ENCODE measurements at regions of chr9 and their contacts with region 1.

Region 1: GRCh38 chr9:109244157-109245132 is 76.4 kb downstream of the EPB41L4B start:
- DNase-seq: no peak
- H3K4me3 ChIP-seq: no peak overlapping the region
- H3K27ac ChIP-seq: no peak overlapping the region
- H3K4me1 ChIP-seq: peaks cover 0 to 6% (median 0%) of the 10 kb centered on the region in 4 donors
- H3K27me3 ChIP-seq: peaks cover 0 to 12% (median 0%) of the 10 kb centered on the region in 4 donors
- CTCF ChIP-seq: peak; percentile 73 to 98 (median 93)
- EP300 ChIP-seq: no peak
- POLR2A ChIP-seq: no peak

Region 2: DNA sequence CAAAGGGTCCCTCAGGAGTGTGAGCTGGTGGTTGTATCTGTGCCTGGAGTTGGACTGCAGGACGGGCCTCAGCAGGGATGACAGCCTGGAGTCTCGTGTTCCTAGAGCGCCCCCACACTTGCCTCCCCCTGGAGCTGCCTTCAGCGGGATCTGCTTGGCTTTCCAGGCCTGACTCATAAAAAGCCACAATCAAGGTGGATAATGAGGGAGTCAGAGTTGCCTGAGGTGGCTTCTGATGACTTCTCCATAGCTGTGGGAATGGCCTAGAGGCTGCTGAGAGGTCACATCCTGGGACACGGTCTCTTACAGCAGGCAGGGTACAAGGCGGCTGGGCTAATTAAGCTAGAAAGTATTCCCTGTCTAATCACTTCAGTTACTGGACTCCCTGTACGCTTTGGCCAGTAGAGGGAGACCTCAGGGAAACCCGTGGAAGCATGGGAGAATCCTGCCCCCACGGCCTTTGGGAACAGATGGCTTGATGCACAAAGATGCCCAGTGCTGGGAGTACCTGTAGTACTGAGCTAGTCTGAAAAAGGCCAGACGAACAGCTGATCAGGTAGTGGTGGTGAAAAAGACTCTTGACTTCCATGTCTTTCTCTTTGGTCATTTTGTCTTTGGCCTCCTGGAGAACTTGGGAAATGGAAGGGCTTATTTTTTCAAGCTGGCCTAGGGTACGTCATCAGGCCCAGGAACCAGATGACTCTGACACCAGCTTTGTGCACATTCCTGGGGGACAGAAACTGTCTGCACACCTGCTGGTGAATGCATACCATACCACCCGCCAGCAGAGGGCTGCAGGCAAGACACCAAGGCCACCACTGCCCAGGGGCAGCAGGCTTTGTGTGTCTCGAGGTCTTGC is 61.3 kb before region 1 on chr9:
- intact Hi-C with region 1: no loop called
- DNase-seq: no peak
- H3K4me3 ChIP-seq: no peak overlapping the region
- H3K27ac ChIP-seq: no peak overlapping the region
- H3K4me1 ChIP-seq: no peaks in the 10 kb centered on the region
- H3K27me3 ChIP-seq: peaks cover 0 to 3% (median 0%) of the 10 kb centered on the region in 4 donors
- CTCF ChIP-seq: no peak
- EP300 ChIP-seq: no peak
- POLR2A ChIP-seq: no peak

Region 3: DNA sequence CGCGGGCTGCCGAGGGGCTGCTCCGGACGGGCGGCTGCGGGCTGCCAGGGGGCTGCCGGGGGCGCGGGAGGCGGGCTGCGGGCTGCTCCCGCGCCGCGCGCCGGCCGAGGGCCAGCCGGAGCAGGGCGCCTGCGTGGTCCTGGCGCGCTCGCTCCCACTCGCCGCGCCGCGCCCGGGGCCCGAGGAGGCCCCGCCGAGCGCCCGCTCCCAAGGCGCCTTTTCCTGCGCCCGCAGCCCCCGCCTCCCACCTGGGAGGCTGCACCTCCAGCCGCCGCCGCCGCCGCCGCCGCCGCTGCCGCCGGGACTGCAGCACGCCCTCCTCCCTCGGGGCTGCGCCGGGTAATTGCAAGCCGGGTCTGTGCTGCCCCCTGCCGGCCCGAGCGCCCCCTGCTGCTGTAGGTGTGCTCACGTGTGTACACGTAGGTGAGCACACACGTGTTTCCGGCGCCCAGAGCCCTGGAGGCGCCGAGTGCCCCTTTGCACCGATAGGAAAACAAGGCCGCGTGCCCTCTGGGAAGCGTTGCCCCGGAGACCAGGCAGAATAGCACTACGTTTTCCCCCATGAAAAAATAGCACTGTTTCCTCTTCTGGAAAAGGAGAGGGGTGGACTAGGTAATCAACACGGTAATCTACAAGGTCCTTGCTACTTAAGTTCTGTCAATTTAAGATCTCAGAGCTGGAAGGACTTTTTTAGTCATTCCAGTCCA is 76.5 kb after region 1 on chr9 and contains the start of gene EPB41L4B:
- intact Hi-C with region 1: loop called (anchors 1 kb)
- DNase-seq: no peak
- H3K4me3 ChIP-seq: peak within 1 kb of the TSS; percentile 52 to 71 (median 54)
- H3K27ac ChIP-seq: no peak within 1 kb of the TSS
- H3K4me1 ChIP-seq: peaks cover 14 to 20% (median 16%) of the 10 kb centered on the region in 4 donors
- H3K27me3 ChIP-seq: peaks cover 0 to 35% (median 7%) of the 10 kb centered on the region in 4 donors
- CTCF ChIP-seq: peak; percentile 92 to 97 (median 95)
- EP300 ChIP-seq: no peak
- POLR2A ChIP-seq: no peak
- total RNA-seq, gene EPB41L4B: 0.42 to 2.3 (median 1.5) TPM

Region 4: GRCh38 chr9:109401168-109401989 is 156.9 kb after region 1 on chr9:
- intact Hi-C with region 1: loop called (anchors 10 kb)
- DNase-seq: no peak
- H3K4me3 ChIP-seq: no peak overlapping the region
- H3K27ac ChIP-seq: no peak overlapping the region
- H3K4me1 ChIP-seq: no peaks in the 10 kb centered on the region
- H3K27me3 ChIP-seq: peaks cover 0 to 10% (median 0%) of the 10 kb centered on the region in 4 donors
- CTCF ChIP-seq: peak in 2 of 3 experiments; percentile 34 to 49
- EP300 ChIP-seq: no peak
- POLR2A ChIP-seq: no peak

Region 5: GRCh38 chr9:109469646-109470358 is 225.4 kb after region 1 on chr9:
- intact Hi-C with region 1: loop called (anchors 10 kb)
- DNase-seq: no peak
- H3K4me3 ChIP-seq: no peak overlapping the region
- H3K27ac ChIP-seq: no peak overlapping the region
- H3K4me1 ChIP-seq: peaks cover 0 to 9% (median 4%) of the 10 kb centered on the region in 4 donors
- H3K27me3 ChIP-seq: peaks cover 0 to 3% (median 0%) of the 10 kb centered on the region in 4 donors
- CTCF ChIP-seq: peak; percentile 70 to 92 (median 76)
- EP300 ChIP-seq: no peak
- POLR2A ChIP-seq: no peak

Measured in esophagus muscularis mucosa (tissue), 4 donors.